CD14-positive monocyte (primary cell): ENCODE measurements at regions of chr22 and their contacts with region 1.

Region 1: DNA sequence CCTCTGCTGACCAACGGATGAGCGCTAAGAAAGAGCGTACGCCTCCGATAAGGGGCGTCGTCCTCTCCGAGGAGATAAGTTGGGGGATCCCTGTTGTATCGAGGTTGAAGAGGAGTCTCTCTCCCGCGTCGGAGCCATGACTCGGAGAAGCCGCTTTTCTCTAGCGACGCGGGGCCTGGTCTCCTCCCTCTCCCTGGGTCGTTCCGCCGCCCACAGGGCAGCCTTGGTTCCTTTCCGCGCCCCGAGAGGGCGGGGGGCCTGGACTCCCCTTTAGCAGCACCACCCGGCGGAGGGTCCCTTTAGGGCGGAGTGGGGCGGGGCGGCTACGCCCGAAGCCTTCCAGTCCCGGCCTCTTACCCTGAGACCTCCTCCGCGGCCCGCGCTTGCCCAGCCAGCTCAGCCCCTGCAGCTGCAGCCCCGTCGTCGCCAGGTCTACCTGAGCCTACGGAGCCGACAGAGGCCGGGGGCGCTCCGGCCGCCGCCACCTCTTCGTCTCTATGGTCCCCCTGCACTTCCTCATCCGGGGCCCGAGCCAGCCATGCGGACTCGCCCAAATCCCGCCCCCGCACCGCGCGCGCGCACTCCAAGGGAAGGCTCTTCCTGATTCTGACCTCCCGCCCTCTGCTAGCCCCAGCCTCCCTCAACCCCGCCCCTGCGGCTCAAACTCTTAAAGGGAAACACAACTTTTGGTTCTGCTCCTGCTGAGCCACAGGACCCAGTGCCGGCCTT is at the start of gene PRR14L:
- DNase-seq: peak; percentile 93 to 97 (median 96)
- H3K4me3 ChIP-seq: peak within 1 kb of the TSS; percentile 65 to 98 (median 92)
- H3K4me3 Mint-ChIP-seq: peak within 1 kb of the TSS; percentile 90 to 94
- H3K27ac ChIP-seq: peak within 1 kb of the TSS; percentile 77 to 97
- H3K27ac Mint-ChIP-seq: peak within 1 kb of the TSS; percentile 89 to 95 (median 93)
- H3K4me1 ChIP-seq: peaks cover 52 to 69% of the 10 kb centered on the region in 2 donors
- H3K4me1 Mint-ChIP-seq: peaks cover 57% of the 10 kb centered on the region
- H3K27me3 ChIP-seq: no peaks in the 10 kb centered on the region
- H3K27me3 Mint-ChIP-seq: peaks cover 0 to 5% (median 0%) of the 10 kb centered on the region in 3 donors
- CTCF ChIP-seq: no peak
- polyA plus RNA-seq, gene PRR14L: 13.2 to 41.4 (median 14.6) TPM

Region 2: DNA sequence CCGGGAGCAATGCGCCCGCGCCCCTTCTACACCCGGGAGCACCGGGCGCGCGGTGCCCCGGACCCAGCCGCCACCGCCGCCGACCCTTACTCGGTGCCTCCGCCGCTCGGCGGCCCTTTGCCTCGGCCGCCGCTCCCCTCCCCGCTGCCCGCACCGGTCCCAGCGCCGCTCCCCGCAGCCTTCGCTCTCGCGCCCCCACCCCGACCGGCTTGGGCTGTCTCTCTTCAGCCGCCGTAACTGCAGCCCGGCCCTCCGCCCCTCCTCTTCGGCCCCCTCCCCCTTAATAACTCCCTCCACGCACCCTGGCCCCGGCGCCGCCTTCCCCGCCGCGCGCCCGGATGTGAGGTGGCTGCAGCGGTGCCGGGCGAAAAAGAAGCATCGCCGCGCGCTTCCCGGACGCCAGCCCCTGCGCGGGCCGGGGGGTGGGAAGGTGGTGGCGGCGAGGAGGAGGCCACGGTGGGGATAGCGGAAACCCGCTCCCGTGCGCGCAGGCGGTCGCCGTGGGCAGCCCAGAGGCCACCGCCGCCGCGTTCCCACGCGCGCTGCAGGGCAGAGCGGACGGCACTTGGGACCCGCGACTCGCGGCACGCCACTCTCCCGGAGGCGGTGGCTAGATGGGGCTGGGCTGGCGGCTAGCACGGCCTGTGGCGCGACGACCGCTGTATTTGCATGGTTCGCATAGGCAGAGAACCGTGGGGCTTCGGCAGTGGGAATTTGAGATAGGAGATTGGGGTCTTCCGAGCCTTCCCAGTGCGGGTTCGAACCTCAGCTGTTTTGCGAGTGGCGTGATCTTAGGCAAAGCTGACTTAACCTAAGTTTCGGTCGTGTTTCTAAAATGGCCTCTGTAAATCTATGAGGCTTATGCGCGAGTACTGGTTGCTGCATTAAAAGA is 259.9 kb before region 1 on chr22 and contains the start of gene EIF4ENIF1:
- intact Hi-C with region 1: loop called (anchors 5 to 10 kb)
- DNase-seq: peak; percentile 46 to 75 (median 69)
- H3K4me3 ChIP-seq: peak within 1 kb of the TSS; percentile 70 to 88 (median 81)
- H3K4me3 Mint-ChIP-seq: peak within 1 kb of the TSS; percentile 92 to 95
- H3K27ac ChIP-seq: peak within 1 kb of the TSS; percentile 94 to 98
- H3K27ac Mint-ChIP-seq: peak within 1 kb of the TSS; percentile 97 to 99 (median 98)
- H3K4me1 ChIP-seq: peaks cover 24 to 29% of the 10 kb centered on the region in 2 donors
- H3K4me1 Mint-ChIP-seq: peaks cover 28% of the 10 kb centered on the region
- H3K27me3 ChIP-seq: no peaks in the 10 kb centered on the region
- H3K27me3 Mint-ChIP-seq: peaks cover 0 to 3% (median 0%) of the 10 kb centered on the region in 3 donors
- CTCF ChIP-seq: no peak
- polyA plus RNA-seq, gene EIF4ENIF1: 2.5 to 17.0 (median 11.5) TPM

Region 3: DNA sequence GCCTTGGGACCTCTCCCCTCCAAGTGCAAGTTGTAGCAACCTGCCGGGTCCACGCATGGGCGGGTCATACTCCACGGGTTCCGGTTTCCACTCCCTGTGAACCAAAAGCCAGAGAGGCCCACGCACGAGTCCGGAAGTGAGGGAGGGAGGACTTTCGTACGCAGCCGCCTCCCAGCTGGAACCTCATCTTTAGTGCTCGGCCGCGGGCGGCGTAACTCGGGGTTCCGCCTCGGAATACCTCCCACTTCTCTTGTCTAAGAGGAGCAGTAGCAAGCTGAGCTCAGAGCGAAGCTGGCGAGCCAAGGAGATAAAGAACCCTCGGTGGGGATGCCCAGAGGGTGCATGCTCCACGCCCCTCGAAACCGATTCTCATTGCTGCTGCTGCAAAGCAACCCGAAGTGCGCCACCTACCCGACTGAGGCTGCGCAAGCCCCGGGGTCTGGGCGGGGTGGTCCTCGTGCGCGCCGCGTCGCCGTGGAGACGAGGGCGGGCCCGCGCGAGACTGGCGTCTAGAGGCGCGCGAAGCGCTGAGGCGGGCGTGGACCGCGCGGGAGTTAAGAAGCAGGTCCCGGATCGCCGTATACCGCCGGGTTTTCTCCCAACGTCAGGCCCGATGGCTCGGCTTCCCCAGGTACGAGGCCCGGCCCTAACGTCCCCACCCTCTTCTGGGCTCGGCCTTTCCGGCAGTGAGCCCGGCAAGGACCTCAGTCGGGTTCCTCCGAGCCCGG is 253.6 kb before region 1 on chr22 and contains the start of gene SFI1:
- intact Hi-C with region 1: loop called in 1 of 2 experiments (anchors 10 kb)
- DNase-seq: peak; percentile 82 to 85 (median 84)
- H3K4me3 ChIP-seq: peak within 1 kb of the TSS; percentile 49 to 93 (median 90)
- H3K4me3 Mint-ChIP-seq: peak within 1 kb of the TSS; percentile 92 to 96
- H3K27ac ChIP-seq: peak within 1 kb of the TSS; percentile 82 to 83
- H3K27ac Mint-ChIP-seq: peak within 1 kb of the TSS; percentile 89 to 96 (median 94)
- H3K4me1 ChIP-seq: peaks cover 22 to 30% of the 10 kb centered on the region in 2 donors
- H3K4me1 Mint-ChIP-seq: peaks cover 18% of the 10 kb centered on the region
- H3K27me3 ChIP-seq: no peaks in the 10 kb centered on the region
- H3K27me3 Mint-ChIP-seq: peaks cover 0 to 3% (median 2%) of the 10 kb centered on the region in 3 donors
- CTCF ChIP-seq: peak; percentile 25
- polyA plus RNA-seq, gene SFI1: 1.7 to 43.4 (median 3.6) TPM

Region 4: GRCh38 chr22:31625661-31626426 is 124.0 kb before region 1 on chr22:
- intact Hi-C with region 1: no loop called
- DNase-seq: no peak
- H3K4me3 ChIP-seq: no peak overlapping the region
- H3K4me3 Mint-ChIP-seq: no peak overlapping the region
- H3K27ac ChIP-seq: peak overlapping the region in 1 of 2 donors; percentile 58
- H3K27ac Mint-ChIP-seq: peak overlapping the region in 4 of 7 donors; percentile 24 to 46 (median 39)
- H3K4me1 ChIP-seq: peaks cover 12 to 19% of the 10 kb centered on the region in 2 donors
- H3K4me1 Mint-ChIP-seq: peaks cover 17% of the 10 kb centered on the region
- H3K27me3 ChIP-seq: no peaks in the 10 kb centered on the region
- H3K27me3 Mint-ChIP-seq: no peaks in the 10 kb centered on the region
- CTCF ChIP-seq: no peak

Region 5: DNA sequence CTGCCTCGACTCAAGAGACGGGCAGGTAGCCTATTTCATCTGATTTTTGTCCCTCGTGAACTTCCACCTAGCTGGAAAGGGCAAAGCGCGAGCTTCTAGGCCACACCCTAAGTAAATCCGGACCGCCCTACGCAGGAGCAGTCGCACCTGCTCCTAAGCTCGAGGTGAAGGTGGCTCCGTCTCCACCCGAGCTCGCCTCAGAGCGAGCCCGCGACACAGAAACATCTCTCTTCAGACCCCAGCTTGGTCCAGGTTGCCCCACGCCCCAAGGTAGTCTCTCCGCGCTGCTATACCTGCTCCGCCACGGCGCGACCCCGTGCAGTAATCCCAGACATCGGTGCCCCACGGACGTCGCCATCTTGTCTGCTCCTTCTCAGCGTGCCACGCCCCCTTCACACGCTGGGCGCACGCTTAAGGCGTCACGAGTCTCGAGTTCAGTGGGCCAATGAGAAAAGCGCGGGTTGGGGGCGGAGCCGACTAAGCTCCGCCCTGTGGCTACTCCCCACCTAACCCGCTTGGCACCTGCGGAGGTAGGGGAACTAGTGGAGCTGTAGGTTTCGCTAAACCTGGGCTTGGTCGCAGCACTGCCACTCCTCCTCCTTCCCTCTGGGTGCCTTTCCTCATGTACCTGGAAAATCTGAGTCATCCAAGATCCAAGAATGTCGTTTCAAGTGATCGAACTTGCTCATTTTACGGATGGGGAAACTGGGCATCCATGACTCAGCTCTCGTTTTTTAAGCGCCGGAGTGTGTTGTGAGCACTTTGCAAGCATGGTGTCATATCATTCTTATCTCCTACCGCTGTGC is 87.7 kb before region 1 on chr22 and contains the start of gene PISD:
- intact Hi-C with region 1: loop called in 1 of 2 experiments (anchors 5 kb)
- DNase-seq: peak; percentile 93 to 95 (median 94)
- H3K4me3 ChIP-seq: peak within 1 kb of the TSS; percentile 57 to 100 (median 92)
- H3K4me3 Mint-ChIP-seq: peak within 1 kb of the TSS; percentile 99 to 100
- H3K27ac ChIP-seq: peak within 1 kb of the TSS; percentile 62 to 95
- H3K27ac Mint-ChIP-seq: peak within 1 kb of the TSS; percentile 94 to 97 (median 96)
- H3K4me1 ChIP-seq: peaks cover 23 to 29% of the 10 kb centered on the region in 2 donors
- H3K4me1 Mint-ChIP-seq: peaks cover 23% of the 10 kb centered on the region
- H3K27me3 ChIP-seq: no peaks in the 10 kb centered on the region
- H3K27me3 Mint-ChIP-seq: peaks cover 0 to 1% (median 0%) of the 10 kb centered on the region in 3 donors
- CTCF ChIP-seq: no peak
- polyA plus RNA-seq, gene PISD: 38.1 to 112 (median 45.3) TPM

Region 6: GRCh38 chr22:31676700-31677099 is 73.1 kb before region 1 on chr22:
- intact Hi-C with region 1: loop called (anchors 5 kb)
- DNase-seq: peak; percentile 94 to 97 (median 96)
- H3K4me3 ChIP-seq: peak overlapping the region; percentile 46 to 78 (median 74)
- H3K4me3 Mint-ChIP-seq: peak overlapping the region; percentile 79 to 94
- H3K27ac ChIP-seq: peak overlapping the region; percentile 46 to 89
- H3K27ac Mint-ChIP-seq: peak overlapping the region; percentile 86 to 93 (median 92)
- H3K4me1 ChIP-seq: peaks cover 33 to 37% of the 10 kb centered on the region in 2 donors
- H3K4me1 Mint-ChIP-seq: peaks cover 39% of the 10 kb centered on the region
- H3K27me3 ChIP-seq: no peaks in the 10 kb centered on the region
- H3K27me3 Mint-ChIP-seq: no peaks in the 10 kb centered on the region
- CTCF ChIP-seq: no peak

Region 7: DNA sequence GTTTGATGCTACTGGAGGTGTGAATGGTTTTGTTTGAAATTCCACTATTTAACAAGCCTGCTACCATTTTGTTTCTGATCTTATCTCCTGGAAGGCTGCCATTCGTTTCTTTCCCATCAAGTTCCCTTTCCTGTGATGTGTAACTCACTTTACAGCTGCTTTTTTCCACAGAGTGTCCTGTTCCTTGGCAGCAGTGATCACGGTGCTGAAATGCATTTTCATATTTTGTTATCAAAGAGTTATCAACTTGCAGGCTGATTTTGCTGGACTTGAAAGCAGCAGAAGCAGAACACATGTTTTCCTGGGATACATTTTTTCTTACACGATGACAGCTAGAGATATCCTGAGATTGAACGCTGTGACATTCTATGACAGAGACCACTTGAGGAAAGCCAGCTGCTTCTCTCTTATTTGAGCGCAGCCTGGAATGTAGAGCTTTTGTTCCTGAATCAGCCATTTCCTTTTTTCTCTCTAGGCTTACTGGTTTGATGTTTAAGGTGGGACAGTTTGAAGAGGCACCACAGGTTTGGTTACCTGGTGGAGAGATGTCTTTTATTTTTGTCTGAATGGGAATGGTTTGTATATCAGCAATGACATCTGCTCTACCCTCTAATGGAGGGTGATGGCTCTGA is 34.5 kb before region 1 on chr22:
- intact Hi-C with region 1: no loop called
- DNase-seq: no peak
- H3K4me3 ChIP-seq: no peak overlapping the region
- H3K4me3 Mint-ChIP-seq: no peak overlapping the region
- H3K27ac ChIP-seq: no peak overlapping the region
- H3K27ac Mint-ChIP-seq: peak overlapping the region in 2 of 7 donors; percentile 6 to 74
- H3K4me1 ChIP-seq: no peaks in the 10 kb centered on the region
- H3K4me1 Mint-ChIP-seq: peaks cover 4% of the 10 kb centered on the region
- H3K27me3 ChIP-seq: no peaks in the 10 kb centered on the region
- H3K27me3 Mint-ChIP-seq: no peaks in the 10 kb centered on the region
- CTCF ChIP-seq: no peak

Region 8: DNA sequence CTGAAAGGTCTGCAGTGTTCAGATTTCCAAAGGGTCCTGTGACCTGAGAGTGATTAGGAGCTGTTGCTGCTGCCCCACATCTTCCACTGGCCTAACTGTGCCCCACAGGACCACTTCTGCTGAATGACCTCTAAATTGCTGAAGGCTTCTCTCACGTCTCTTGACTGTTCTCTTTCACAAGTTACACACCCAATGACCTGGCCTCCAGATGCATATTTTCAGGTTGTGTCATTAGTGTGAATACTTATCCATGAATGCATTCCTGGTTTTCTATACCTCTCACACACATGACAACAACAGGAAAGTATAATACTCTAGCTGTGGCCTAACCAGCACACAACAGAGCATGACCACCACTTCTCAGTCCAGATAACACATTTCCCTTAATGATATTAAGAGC is 15.3 kb before region 1 on chr22:
- intact Hi-C with region 1: no loop called
- DNase-seq: no peak
- H3K4me3 ChIP-seq: no peak overlapping the region
- H3K4me3 Mint-ChIP-seq: no peak overlapping the region
- H3K27ac ChIP-seq: peak overlapping the region in 1 of 2 donors; percentile 6
- H3K27ac Mint-ChIP-seq: peak overlapping the region in 2 of 7 donors; percentile 16 to 60
- H3K4me1 ChIP-seq: peaks cover 0 to 2% of the 10 kb centered on the region in 2 donors
- H3K4me1 Mint-ChIP-seq: peaks cover 4% of the 10 kb centered on the region
- H3K27me3 ChIP-seq: no peaks in the 10 kb centered on the region
- H3K27me3 Mint-ChIP-seq: no peaks in the 10 kb centered on the region
- CTCF ChIP-seq: no peak